ENCODE measurements at regions of chr14 and their contacts with region 1.

Region 1: DNA sequence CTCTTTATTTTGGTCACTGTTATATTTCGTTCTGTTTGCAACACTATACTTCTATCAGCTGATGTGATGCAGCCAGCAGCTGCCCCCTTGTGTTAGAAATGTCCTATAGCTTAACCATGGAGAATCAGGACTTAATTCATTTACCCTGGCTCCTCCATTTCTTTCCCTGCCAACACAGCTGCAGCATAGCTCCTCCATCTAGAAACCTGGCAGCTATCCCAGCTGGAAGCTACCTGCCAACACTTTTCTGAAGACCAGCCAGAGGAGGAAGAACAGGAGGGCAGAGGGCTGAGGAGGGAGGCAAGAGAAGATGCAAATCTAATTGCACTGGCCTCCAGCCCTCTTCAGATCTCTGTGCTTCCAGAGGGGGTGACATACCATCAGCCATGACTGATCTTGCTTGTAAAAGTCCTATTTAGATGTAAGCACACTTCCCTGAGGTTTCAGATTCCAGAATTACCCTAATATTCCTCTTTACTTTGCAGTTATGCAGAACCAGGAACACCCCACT is 156.8 kb upstream of the TMEM260 start:
- DNase-seq: peak; percentile 79
- ATAC-seq: peak; percentile 92
- H3K4me3 ChIP-seq: no peak overlapping the region
- H3K27ac ChIP-seq: no peak overlapping the region
- H3K4me1 ChIP-seq: peaks cover 10% of the 10 kb centered on the region; the same call in 1 of the 2 replicates
- H3K27me3 ChIP-seq: peaks cover 22% of the 10 kb centered on the region
- CTCF ChIP-seq: peak; percentile 89
- POLR2A ChIP-seq: no peak
- RAD21 ChIP-seq: peak; percentile 85

Region 2: GRCh38 chr14:55707365-55707804 is 715.4 kb before region 1 on chr14:
- CTCF ChIA-PET with region 1: no interaction called
- POLR2A ChIA-PET with region 1: no interaction called
- dilution Hi-C with region 1: no loop called
- in situ Hi-C with region 1: no loop called
- intact Hi-C with region 1: loop called (anchors 1 kb)
- DNase-seq: peak; percentile 76
- ATAC-seq: peak; percentile 81
- H3K4me3 ChIP-seq: no peak overlapping the region
- H3K27ac ChIP-seq: no peak overlapping the region
- H3K4me1 ChIP-seq: peaks cover 4% of the 10 kb centered on the region
- H3K27me3 ChIP-seq: no peaks in the 10 kb centered on the region
- CTCF ChIP-seq: peak; percentile 82
- POLR2A ChIP-seq: no peak
- RAD21 ChIP-seq: peak; percentile 91

Region 3: DNA sequence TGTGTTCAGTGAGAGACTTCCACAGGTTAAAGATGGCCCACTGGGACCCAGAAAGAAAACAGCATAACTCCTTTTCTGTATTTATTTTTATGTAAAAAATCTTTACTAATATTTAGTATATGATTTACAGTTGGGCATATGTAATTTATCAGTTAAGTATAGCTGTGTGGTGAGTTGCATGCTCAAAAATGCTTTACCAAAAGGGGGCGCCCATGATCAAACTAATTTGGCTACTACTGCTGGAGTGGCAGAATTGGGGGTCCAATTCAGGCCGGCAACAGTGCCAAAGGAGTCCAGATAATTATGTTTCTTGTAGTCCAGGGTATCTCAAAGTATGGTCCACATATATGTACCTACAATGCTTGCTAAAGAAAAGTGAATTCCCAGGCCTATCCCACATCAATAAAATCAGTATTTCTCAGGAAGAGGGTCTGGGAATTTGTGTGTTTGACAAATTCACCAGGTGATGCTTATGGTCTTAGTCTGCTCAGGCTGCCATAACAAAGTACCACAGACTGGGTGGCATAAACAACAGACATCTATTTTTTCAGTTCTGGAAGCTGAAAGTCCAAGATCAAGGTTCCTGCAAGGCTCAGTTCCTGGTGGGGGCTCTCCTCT is 690.8 kb before region 1 on chr14:
- CTCF ChIA-PET with region 1: interaction called, 5 read pairs
- POLR2A ChIA-PET with region 1: no interaction called
- dilution Hi-C with region 1: no loop called
- in situ Hi-C with region 1: no loop called
- intact Hi-C with region 1: loop called (anchors 1 kb)
- DNase-seq: peak; percentile 24
- ATAC-seq: peak; percentile 66
- H3K4me3 ChIP-seq: no peak overlapping the region
- H3K27ac ChIP-seq: no peak overlapping the region
- H3K4me1 ChIP-seq: no peaks in the 10 kb centered on the region
- H3K27me3 ChIP-seq: no peaks in the 10 kb centered on the region
- CTCF ChIP-seq: peak; percentile 64
- POLR2A ChIP-seq: no peak
- RAD21 ChIP-seq: peak; percentile 72

Region 4: GRCh38 chr14:56195704-56196103 is 227.1 kb before region 1 on chr14:
- CTCF ChIA-PET with region 1: no interaction called
- POLR2A ChIA-PET with region 1: no interaction called
- dilution Hi-C with region 1: no loop called
- in situ Hi-C with region 1: no loop called
- intact Hi-C with region 1: loop called (anchors 10 kb)
- DNase-seq: peak; percentile 58
- ATAC-seq: no peak
- H3K4me3 ChIP-seq: no peak overlapping the region
- H3K27ac ChIP-seq: no peak overlapping the region
- H3K4me1 ChIP-seq: peaks cover 18% of the 10 kb centered on the region
- H3K27me3 ChIP-seq: no peaks in the 10 kb centered on the region
- CTCF ChIP-seq: no peak
- POLR2A ChIP-seq: no peak
- RAD21 ChIP-seq: no peak

Region 5: DNA sequence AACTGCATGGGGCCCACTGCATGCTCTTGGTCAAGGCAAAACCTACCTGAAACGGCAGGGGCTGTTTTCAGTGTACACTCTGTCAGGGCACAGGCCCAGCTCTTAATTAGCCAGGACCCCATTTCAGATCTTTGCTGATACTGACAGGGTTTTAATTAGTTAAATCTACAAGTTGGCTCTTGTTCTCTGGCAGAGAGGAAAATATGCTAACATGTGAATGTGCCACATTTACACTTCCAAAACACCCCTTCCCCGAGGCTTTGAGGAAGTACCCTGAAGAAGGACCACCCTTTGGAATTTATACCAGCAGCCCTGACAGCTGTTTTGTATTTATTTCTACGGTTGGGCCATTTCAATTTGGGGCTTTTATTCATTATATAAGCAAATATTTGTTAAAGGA is 321.3 kb after region 1 on chr14:
- CTCF ChIA-PET with region 1: no interaction called
- POLR2A ChIA-PET with region 1: no interaction called
- dilution Hi-C with region 1: no loop called
- in situ Hi-C with region 1: no loop called
- intact Hi-C with region 1: no loop called
- DNase-seq: no peak
- ATAC-seq: no peak
- H3K4me3 ChIP-seq: no peak overlapping the region
- H3K27ac ChIP-seq: no peak overlapping the region
- H3K4me1 ChIP-seq: no peaks in the 10 kb centered on the region
- H3K27me3 ChIP-seq: no peaks in the 10 kb centered on the region
- CTCF ChIP-seq: no peak
- POLR2A ChIP-seq: no peak
- RAD21 ChIP-seq: no peak

Measured in IMR-90 (cell line).